Gastrocnemius medialis (tissue), 4 donors: ENCODE measurements at regions of chr17 and their contacts with region 1.

Region 1: DNA sequence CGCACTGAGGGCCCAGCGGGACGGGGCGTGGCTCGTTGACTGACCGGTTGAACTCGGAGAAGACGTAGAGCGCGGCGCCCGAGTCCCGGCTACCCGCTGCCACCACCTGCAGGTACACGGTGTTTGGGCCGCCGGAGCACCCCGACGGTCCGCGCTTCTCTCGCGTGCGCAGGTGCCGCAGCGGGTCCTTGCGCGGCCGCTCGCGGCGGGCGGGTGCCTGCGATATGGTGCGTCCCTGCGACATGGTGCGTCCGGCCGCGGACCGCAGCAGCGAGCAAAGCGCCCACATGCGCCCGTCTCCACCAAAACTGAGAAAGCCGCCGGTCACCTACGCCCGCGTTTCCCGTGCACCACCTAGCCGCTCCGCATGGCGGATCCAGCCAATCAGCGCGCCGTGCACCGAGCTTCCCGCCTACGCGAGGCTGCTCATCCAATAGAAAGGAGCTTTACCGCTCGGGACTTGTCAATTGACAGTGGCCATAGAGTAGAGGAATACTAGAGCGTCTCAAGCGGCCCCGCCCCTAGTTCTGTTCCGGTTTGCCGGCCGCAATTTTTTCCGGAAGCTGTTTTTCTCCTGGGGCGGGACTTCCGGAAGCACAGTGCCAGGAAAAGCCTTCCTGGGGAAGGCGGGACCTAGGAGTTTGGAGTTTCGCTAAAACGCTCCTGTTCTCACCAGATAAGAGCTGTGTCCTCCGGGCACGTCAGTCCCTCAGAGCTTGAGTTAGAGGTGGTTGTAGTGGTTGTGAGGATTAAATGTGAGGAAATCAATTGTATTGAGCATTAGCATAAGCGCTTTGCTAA is at the start of gene ELAC2:
- DNase-seq: peak; percentile 96 to 97
- ATAC-seq: peak; percentile 99 to 100
- H3K4me3 ChIP-seq: peak within 1 kb of the TSS; percentile 75 to 94 (median 86)
- H3K27ac ChIP-seq: peak within 1 kb of the TSS; percentile 78 to 87 (median 82)
- H3K4me1 ChIP-seq: peaks cover 12 to 14% of the 10 kb centered on the region in 2 donors
- H3K27me3 ChIP-seq: no peaks in the 10 kb centered on the region
- CTCF ChIP-seq: peak in 4 of 5 experiments; percentile 7 to 26 (median 20)
- POLR2A ChIP-seq: peak; percentile 54 to 61
- total RNA-seq, gene ELAC2: 70.7 to 78.7 (median 76.2) TPM

Region 2: GRCh38 chr17:11997147-11997846 is 1020.6 kb before region 1 on chr17 and contains the start of gene ZNF18:
- in situ Hi-C with region 1: loop called in 1 of 4 experiments (anchors 25 kb)
- intact Hi-C with region 1: loop called (anchors 10 kb)
- DNase-seq: peak; percentile 96
- ATAC-seq: peak; percentile 92 to 93
- H3K4me3 ChIP-seq: peak within 1 kb of the TSS; percentile 85 to 94 (median 92)
- H3K27ac ChIP-seq: peak within 1 kb of the TSS; percentile 90 to 95 (median 93)
- H3K4me1 ChIP-seq: peaks cover 7 to 11% of the 10 kb centered on the region in 2 donors
- H3K27me3 ChIP-seq: no peaks in the 10 kb centered on the region
- CTCF ChIP-seq: no peak
- POLR2A ChIP-seq: peak; percentile 98
- total RNA-seq, gene ZNF18: 4.7 to 15.8 (median 7.8) TPM

Region 3: DNA sequence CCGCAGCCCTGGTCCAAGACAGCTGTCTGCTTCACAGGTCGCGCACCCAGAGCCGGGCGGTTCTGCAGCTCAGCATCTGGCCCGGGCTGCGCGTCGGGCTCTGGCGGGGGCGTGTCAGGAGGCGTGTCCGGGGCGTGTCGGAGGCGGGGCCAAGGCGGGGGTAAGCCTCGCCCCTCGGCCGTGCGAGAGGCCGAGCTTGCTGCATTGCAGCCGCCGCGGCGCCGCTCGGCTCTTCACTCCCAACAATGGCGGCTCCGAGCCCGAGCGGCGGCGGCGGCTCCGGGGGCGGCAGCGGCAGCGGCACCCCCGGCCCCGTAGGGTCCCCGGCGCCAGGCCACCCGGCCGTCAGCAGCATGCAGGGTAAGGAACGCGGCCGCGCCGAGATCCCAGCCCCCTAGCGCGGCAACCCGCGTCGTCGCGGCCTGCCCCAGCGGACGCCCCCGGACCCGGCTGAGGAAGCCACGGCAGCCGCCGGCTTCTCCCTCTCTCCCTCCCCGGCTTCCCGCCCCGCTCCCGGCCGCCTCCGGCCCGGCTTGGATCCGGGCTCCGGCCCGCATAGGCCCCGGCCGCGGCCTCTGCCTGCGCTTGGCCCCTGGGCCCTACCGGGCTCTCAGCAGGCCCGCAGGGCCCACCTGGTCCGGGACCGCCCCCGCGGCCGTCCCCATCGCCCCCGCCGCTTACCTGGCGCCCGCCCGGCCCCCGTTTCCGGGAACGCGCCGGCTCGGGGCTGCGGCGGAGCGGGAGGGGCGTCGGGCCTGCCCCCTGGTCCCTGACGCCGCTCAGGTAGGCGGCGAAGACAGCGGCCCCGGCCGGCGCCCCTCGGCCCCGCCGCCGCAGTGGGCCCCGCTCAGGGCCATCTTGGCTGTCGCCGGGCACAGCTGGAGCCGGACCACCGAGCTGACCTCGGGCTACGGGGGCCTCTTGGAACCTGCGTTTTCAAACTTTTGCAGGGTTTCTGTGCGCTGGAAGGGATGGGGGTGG is 996.9 kb before region 1 on chr17 and contains the start of gene MAP2K4:
- in situ Hi-C with region 1: loop called in 1 of 4 experiments (anchors 25 kb)
- intact Hi-C with region 1: loop called (anchors 10 kb)
- DNase-seq: peak; percentile 83 to 87
- ATAC-seq: peak; percentile 96 to 98
- H3K4me3 ChIP-seq: peak within 1 kb of the TSS; percentile 62 to 93 (median 70)
- H3K27ac ChIP-seq: peak within 1 kb of the TSS; percentile 65 to 93 (median 82)
- H3K4me1 ChIP-seq: peaks cover 27 to 41% of the 10 kb centered on the region in 2 donors
- H3K27me3 ChIP-seq: no peaks in the 10 kb centered on the region
- CTCF ChIP-seq: peak in 1 of 5 experiments; percentile 11
- POLR2A ChIP-seq: peak; percentile 84 to 89
- total RNA-seq, gene MAP2K4: 29.8 to 58.6 (median 30.2) TPM

Region 4: DNA sequence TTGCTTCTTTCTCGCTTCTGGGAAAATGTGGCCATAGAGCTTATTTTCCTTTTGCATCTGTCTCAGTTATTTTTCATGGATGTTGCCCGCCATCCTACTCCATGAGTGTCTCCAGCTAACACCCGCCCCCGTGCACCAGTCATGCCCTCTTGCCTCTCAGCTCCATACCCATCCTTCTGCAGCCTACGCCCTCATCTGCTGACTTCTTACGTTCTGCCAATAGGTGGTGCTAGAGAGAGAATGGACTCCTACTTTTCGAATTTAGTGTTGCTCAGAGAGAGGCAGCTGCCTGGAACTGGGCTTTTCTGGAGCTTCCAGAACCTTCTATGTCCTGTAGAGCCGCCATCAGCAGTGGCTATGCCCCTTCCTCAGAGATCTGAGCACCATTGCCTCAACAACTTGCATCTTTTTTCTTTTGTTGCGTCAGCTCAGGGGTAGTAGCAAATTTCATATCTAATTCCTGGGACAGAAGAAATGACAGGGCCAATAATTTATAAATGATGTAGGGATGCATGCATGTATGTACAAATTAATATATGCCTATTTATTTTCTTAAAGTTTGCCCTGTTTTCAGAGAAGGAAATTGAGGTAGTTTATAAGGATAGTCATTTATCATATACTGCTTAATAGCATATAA is 471.9 kb before region 1 on chr17:
- in situ Hi-C with region 1: loop called in 1 of 4 experiments (anchors 25 kb)
- intact Hi-C with region 1: no loop called
- DNase-seq: no peak
- ATAC-seq: no peak
- H3K4me3 ChIP-seq: no peak overlapping the region
- H3K27ac ChIP-seq: no peak overlapping the region
- H3K4me1 ChIP-seq: no peaks in the 10 kb centered on the region
- H3K27me3 ChIP-seq: no peaks in the 10 kb centered on the region
- CTCF ChIP-seq: peak in 3 of 5 experiments; percentile 26 to 55 (median 45)
- POLR2A ChIP-seq: no peak

Region 5: GRCh38 chr17:12940699-12941098 is 77.2 kb before region 1 on chr17:
- in situ Hi-C with region 1: no loop called
- intact Hi-C with region 1: no loop called
- DNase-seq: no peak
- ATAC-seq: no peak
- H3K4me3 ChIP-seq: no peak overlapping the region
- H3K27ac ChIP-seq: no peak overlapping the region
- H3K4me1 ChIP-seq: no peaks in the 10 kb centered on the region
- H3K27me3 ChIP-seq: no peaks in the 10 kb centered on the region
- CTCF ChIP-seq: no peak
- POLR2A ChIP-seq: no peak

Region 6: DNA sequence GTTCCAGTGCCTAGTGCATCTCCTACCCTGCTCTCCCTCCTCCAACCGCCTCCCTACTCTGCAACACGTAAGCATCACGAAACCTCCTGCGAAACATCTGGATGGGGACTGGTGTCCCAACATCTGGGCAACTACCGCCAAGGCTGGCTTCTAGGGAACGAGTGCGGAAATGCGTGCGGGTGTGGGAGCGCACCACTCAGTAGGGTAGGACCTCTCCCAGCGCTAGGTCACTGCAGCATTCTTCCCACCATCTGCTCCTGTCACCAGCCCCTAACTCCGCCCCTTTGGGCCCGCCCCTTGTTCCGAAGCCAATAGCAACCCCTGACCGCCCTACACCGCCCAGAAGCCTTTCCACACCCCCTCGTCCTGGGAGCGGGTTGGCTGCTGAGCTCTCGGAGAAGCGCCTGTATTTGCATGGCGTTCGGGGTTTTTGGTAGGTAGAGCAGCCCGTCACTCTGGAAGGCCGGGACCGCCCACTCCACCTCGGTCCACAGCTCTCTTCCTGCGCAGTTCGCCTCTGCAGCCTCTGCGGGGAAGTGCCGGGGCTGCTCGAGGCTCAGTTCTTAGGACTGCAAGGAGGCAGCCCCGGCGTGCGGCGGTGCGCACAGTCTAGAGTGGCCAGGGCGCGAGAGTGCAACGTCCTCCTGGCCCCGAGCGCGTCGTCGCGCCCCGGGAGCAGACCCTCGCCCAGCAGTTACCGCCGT is 1282.9 kb after region 1 on chr17 and contains the start of gene HS3ST3B1:
- in situ Hi-C with region 1: no loop called
- intact Hi-C with region 1: loop called (anchors 5 kb)
- DNase-seq: peak; percentile 96 to 98
- ATAC-seq: peak; percentile 90 to 95
- H3K4me3 ChIP-seq: peak within 1 kb of the TSS; percentile 57 to 74 (median 70)
- H3K27ac ChIP-seq: peak within 1 kb of the TSS; percentile 64 to 80 (median 70)
- H3K4me1 ChIP-seq: peaks cover 35 to 44% of the 10 kb centered on the region in 2 donors
- H3K27me3 ChIP-seq: peaks cover 60 to 89% (median 85%) of the 10 kb centered on the region in 3 donors
- CTCF ChIP-seq: peak in 1 of 5 experiments; percentile 14
- POLR2A ChIP-seq: peak; percentile 77 to 86
- total RNA-seq, gene HS3ST3B1: 0.10 to 4.0 (median 0.82) TPM